Naive thymus-derived CD8-positive, alpha-beta T cell (primary cell): ENCODE measurements at regions of chr14 and their contacts with region 1.

Region 1: GRCh38 chr14:49633640-49634546 is 1.2 kb downstream of the DNAAF2 start:
- DNase-seq: peak; percentile 90 to 97 (median 94)
- ATAC-seq: peak; percentile 78 to 82
- H3K4me3 Mint-ChIP-seq: peak overlapping the region; percentile 92 to 99 (median 96)
- H3K27ac Mint-ChIP-seq: peak overlapping the region; percentile 90 to 98 (median 93)
- H3K4me1 Mint-ChIP-seq: peaks cover 15 to 65% (median 56%) of the 10 kb centered on the region in 4 donors
- H3K27me3 Mint-ChIP-seq: no peaks in the 10 kb centered on the region

Region 2: DNA sequence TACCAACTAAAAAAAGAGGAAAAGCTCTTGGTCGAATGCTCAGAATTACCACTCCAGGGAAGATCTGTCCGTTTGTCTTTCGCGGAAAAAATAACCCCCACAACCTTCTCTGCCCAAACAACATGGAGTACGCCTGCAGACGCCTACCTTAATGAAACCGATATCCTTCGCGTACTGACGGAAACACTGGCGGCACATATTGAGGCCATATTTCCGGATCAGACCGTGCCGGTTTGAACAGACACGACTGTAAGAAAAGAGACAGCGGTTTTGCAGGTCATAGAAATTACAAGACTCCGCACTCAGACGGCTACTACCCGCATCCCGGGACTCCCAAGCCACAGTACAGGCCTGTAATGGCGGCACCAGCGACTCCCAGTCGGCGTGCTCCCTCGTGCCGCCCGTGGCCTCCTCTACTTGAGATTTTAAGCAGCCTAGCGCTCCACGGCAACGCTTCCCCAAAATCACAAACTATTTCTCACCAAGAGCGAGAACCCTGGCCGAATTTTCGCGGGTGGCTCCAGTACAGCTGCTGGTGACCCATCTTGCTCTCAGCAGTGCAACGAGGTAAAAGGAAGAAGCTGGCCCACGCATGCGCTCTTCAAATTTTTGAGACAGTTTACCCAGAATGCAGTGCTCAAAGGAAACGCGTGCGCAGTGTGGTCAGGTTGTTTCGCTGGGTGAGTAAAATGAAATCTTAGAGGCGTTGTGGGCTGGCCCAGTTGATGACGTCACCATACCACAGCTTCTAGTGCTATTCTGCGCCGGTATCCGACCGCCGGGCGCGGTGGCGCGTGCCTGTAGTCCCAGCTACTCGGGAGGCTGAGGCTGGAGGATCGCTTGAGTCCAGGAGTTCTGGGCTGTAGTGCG is 47.9 kb before region 1 on chr14 and contains the start of gene RPS29:
- POLR2A ChIA-PET with region 1: interaction called, 48 read pairs
- DNase-seq: peak; percentile 87 to 99 (median 98)
- ATAC-seq: peak; percentile 85 to 87
- H3K4me3 Mint-ChIP-seq: peak within 1 kb of the TSS; percentile 89 to 99 (median 94)
- H3K27ac Mint-ChIP-seq: peak within 1 kb of the TSS; percentile 97 to 100 (median 99)
- H3K4me1 Mint-ChIP-seq: peaks cover 21 to 55% (median 46%) of the 10 kb centered on the region in 4 donors
- H3K27me3 Mint-ChIP-seq: peaks cover 0 to 9% (median 0%) of the 10 kb centered on the region in 5 donors
- polyA plus RNA-seq, gene RPS29: 11,853 to 13,490 (median 12,998) TPM

Region 3: DNA sequence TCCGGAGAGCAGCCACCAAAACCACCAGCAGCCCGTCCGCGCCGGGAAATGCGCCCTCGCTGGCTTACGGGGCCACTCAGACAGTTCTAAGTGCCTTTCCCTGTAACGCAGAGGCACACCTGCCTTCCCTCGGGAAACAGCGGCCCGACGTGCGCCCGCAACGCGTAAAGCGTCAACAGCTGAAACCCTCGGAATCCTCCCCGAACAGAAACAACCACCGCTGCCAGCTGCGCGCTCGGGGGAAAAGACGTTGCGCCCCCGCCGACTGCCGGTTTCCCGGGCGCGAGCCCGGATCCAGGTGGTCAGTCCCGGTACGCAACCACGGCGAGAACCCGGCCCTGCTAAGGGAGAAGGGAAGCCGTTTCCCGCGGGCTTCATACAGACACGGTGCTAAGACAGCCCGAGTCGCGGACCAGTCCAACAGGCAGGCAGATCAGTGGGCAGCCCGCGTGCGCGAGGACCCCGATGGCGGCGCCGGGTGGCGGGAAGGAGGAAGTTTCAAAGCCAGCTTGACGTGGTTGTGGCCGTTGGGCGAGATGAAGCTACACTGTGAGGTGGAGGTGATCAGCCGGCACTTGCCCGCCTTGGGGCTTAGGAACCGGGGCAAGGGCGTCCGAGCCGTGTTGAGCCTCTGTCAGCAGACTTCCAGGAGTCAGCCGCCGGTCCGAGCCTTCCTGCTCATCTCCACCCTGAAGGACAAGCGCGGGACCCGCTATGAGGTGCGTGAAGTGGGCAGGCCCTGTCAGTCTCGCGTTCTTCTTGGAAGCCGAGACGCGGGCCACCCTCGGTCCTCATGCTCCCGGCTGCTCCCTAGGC is 35.2 kb before region 1 on chr14 and contains the start of gene LRR1:
- POLR2A ChIA-PET with region 1: interaction called, 25 read pairs
- DNase-seq: peak; percentile 72 to 96 (median 84)
- ATAC-seq: peak; percentile 77 to 82
- H3K4me3 Mint-ChIP-seq: peak within 1 kb of the TSS; percentile 94 to 99 (median 98)
- H3K27ac Mint-ChIP-seq: peak within 1 kb of the TSS; percentile 96 to 100 (median 98)
- H3K4me1 Mint-ChIP-seq: peaks cover 5 to 52% (median 31%) of the 10 kb centered on the region in 4 donors
- H3K27me3 Mint-ChIP-seq: no peaks in the 10 kb centered on the region
- polyA plus RNA-seq, gene LRR1: 8.5 to 10.4 (median 8.9) TPM

Region 4: DNA sequence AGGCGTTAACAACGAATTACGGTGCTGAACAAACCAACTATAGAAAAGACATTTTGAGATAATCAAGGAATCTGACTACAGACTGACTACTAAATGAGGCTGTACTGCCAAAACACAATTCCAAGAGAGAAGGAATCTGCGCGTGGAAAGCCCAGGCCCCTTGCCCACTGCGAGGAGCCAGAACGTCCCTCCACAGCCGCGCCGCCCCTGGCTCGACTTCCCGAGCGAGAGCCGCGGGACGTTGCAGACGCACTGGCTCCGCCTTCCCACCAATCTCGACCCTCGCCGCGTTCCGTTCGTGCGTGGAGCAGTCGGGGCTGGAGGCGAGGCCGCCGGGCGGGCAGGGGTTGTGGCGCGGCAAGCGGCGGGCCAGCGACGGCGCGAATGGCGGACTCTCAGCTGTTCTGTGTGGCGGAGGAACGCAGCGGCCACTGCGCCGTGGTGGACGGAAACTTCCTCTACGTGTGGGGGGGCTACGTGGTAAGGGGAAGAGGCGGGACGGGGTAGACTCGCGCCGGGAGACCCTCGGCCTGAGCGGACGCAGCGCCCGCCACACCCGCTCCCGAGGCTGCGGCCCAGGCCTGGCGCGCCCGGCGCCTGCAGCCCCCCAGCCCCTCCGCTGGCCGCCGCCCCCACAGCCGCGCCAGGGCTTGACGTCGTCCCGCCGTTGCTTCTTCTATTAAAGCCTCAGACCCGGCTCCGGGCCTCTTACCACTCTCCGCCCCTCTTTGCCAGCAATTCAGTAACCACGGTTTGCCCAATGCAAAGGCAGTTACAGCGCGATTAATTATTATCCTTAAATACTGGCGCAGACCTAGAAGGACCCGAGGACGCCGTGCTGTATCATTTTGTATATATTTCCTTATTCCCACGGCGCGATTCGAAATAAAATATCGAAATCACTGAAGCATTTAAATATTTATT is 59.2 kb after region 1 on chr14 and contains the start of gene KLHDC1:
- POLR2A ChIA-PET with region 1: interaction called, 19 read pairs
- DNase-seq: peak; percentile 67 to 88 (median 78)
- ATAC-seq: peak; percentile 87 to 91
- H3K4me3 Mint-ChIP-seq: peak within 1 kb of the TSS; percentile 74 to 94 (median 90)
- H3K27ac Mint-ChIP-seq: peak within 1 kb of the TSS; percentile 66 to 98 (median 93)
- H3K4me1 Mint-ChIP-seq: peaks cover 2 to 54% (median 40%) of the 10 kb centered on the region in 4 donors
- H3K27me3 Mint-ChIP-seq: no peaks in the 10 kb centered on the region
- polyA plus RNA-seq, gene KLHDC1: 2.6 to 9.0 (median 3.2) TPM

Region 5: GRCh38 chr14:49852301-49853157 is 218.6 kb after region 1 on chr14 and contains the start of gene NEMF:
- POLR2A ChIA-PET with region 1: interaction called, 14 read pairs
- DNase-seq: peak; percentile 57 to 89 (median 78)
- ATAC-seq: peak; percentile 80 to 84
- H3K4me3 Mint-ChIP-seq: peak within 1 kb of the TSS; percentile 91 to 100 (median 96)
- H3K27ac Mint-ChIP-seq: peak within 1 kb of the TSS; percentile 93 to 99 (median 96)
- H3K4me1 Mint-ChIP-seq: peaks cover 20 to 48% (median 46%) of the 10 kb centered on the region in 4 donors
- H3K27me3 Mint-ChIP-seq: no peaks in the 10 kb centered on the region
- polyA plus RNA-seq, gene NEMF: 39.6 to 46.1 (median 43.5) TPM